Heart right ventricle (tissue), 16 donors: ENCODE measurements at regions of chr11 and their contacts with region 1.

Region 1: DNA sequence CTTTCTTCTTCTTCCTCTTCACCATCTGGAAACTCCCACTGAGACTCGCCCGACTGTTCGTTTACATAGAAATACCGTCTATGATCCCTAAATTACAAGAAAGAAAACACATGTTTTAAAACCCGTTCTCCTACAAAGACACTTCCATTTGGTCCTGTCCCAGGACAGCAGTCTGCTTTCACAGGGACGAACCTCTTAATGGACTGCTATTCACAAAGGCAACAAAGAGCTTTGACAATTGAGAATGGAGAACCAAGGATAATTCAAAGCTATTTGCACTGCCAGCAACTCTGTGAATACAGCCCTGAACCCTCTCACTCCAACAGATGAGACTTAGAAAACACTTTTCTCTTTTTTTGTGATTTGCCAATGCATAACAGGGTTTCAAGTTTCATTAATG is 16.3 kb upstream of the AGBL2 start:
- DNase-seq: no peak
- ATAC-seq: no peak
- H3K4me3 ChIP-seq: no peak overlapping the region
- H3K27ac ChIP-seq: no peak overlapping the region
- H3K4me1 ChIP-seq: no peaks in the 10 kb centered on the region
- H3K27me3 ChIP-seq: no peaks in the 10 kb centered on the region
- CTCF ChIP-seq: no peak

Region 2: GRCh38 chr11:47819743-47820142 is 88.3 kb after region 1 on chr11:
- intact Hi-C with region 1: loop called in 2 of 10 experiments (anchors 10 kb)
- DNase-seq: no peak
- ATAC-seq: no peak
- H3K4me3 ChIP-seq: no peak overlapping the region
- H3K27ac ChIP-seq: no peak overlapping the region
- H3K4me1 ChIP-seq: no peaks in the 10 kb centered on the region
- H3K27me3 ChIP-seq: no peaks in the 10 kb centered on the region
- CTCF ChIP-seq: no peak

Region 3: DNA sequence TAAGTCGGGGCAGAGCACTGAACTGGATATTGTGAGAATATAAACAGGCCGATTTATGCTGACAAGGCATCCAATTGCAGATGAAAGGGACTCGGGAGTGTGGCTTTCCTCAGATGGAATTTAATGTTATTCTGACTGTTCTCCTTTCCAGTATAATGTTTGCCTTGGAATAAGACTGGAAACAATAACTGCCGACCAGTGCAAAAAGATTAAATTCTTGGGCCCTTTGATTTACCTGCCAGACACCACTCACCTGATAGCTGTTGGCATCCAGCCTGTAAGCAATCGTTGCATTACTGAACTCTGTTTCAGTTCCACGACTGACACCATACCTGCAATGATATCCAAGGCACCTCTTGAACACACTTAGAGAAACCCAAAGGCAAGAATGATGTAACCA is 105.8 kb after region 1 on chr11:
- intact Hi-C with region 1: loop called in 1 of 10 experiments (anchors 10 kb)
- DNase-seq: no peak
- ATAC-seq: no peak
- H3K4me3 ChIP-seq: no peak overlapping the region
- H3K27ac ChIP-seq: no peak overlapping the region
- H3K4me1 ChIP-seq: no peaks in the 10 kb centered on the region
- H3K27me3 ChIP-seq: no peaks in the 10 kb centered on the region
- CTCF ChIP-seq: no peak

Region 4: DNA sequence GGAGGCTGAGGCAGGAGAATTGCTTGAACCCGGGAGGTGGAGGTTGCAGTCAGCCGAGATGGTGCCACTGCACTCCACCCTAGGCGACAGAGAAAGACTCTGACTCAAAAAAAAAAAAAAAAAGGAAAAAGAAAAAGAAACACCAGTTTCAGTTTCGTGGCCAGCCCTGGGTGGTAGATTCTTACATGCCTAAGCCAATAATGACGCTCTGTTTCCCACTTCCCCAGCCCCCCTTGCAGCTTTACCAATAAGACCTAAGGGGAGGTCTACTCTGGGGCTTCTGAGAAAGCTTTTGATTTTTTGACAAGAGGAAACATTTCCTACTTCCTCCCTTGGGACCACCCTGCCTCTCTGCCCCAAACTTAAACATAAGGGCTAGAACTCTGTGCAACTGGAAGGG is 218.9 kb after region 1 on chr11:
- intact Hi-C with region 1: no loop called
- DNase-seq: peak in 1 of 2 donors; percentile 19
- ATAC-seq: peak in 3 of 8 donors; percentile 27 to 56 (median 45)
- H3K4me3 ChIP-seq: no peak overlapping the region
- H3K27ac ChIP-seq: peak overlapping the region in 1 of 10 donors; percentile 42
- H3K4me1 ChIP-seq: peaks cover 0 to 45% (median 4%) of the 10 kb centered on the region in 9 donors
- H3K27me3 ChIP-seq: no peaks in the 10 kb centered on the region
- CTCF ChIP-seq: no peak